ENCODE measurements at regions of chr20 and their contacts with region 1.

Region 1: GRCh38 chr20:57596998-57597939 is 23.0 kb downstream of the ZBP1 start:
- DNase-seq: no peak
- H3K4me3 ChIP-seq: peak overlapping the region in 1 of 2 donors; percentile 9
- H3K27ac ChIP-seq: no peak overlapping the region
- H3K4me1 ChIP-seq: peaks cover 15% of the 10 kb centered on the region
- H3K27me3 ChIP-seq: no peaks in the 10 kb centered on the region
- CTCF ChIP-seq: peak; percentile 88 to 97 (median 95)
- POLR2A ChIP-seq: no peak

Region 2: GRCh38 chr20:57391074-57391554 is 206.2 kb before region 1 on chr20 and contains the start of gene RBM38:
- intact Hi-C with region 1: loop called (anchors 10 kb)
- DNase-seq: no peak
- H3K4me3 ChIP-seq: peak within 1 kb of the TSS; percentile 61 to 92
- H3K27ac ChIP-seq: peak within 1 kb of the TSS; percentile 68
- H3K4me1 ChIP-seq: peaks cover 55% of the 10 kb centered on the region
- H3K27me3 ChIP-seq: no peaks in the 10 kb centered on the region
- CTCF ChIP-seq: no peak
- POLR2A ChIP-seq: no peak
- total RNA-seq, gene RBM38: 24.8 TPM

Region 3: DNA sequence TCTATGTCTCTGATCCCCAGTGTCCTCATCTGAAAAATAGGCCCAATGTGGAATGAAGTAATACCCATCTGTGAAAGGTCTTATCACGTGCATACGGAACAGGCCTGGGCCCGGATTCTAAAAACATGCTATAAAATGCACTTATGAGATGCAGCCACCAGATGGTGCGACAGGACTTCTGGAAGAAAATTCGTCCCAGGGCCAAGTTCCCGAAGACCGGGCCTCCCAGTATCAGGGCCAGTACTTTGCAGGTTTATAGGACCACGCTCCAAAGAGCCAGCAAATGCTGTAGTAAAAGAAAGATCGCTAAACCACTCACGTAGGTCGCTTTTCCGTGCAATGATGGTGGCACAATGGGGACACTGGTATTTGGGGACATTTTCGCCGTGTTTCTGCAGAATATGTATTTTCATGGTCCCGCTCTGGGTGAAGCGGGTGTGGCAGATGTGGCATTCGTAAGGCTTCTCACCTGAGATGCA is 83.0 kb before region 1 on chr20:
- intact Hi-C with region 1: loop called (anchors 2 kb)
- DNase-seq: no peak
- H3K4me3 ChIP-seq: no peak overlapping the region
- H3K27ac ChIP-seq: no peak overlapping the region
- H3K4me1 ChIP-seq: no peaks in the 10 kb centered on the region
- H3K27me3 ChIP-seq: no peaks in the 10 kb centered on the region
- CTCF ChIP-seq: peak; percentile 82 to 92 (median 87)
- POLR2A ChIP-seq: no peak

Region 4: GRCh38 chr20:57991211-57991881 is 394.1 kb after region 1 on chr20:
- intact Hi-C with region 1: no loop called
- DNase-seq: no peak
- H3K4me3 ChIP-seq: no peak overlapping the region
- H3K27ac ChIP-seq: peak overlapping the region; percentile 69
- H3K4me1 ChIP-seq: peaks cover 60% of the 10 kb centered on the region
- H3K27me3 ChIP-seq: no peaks in the 10 kb centered on the region
- CTCF ChIP-seq: no peak
- POLR2A ChIP-seq: no peak

Region 5: GRCh38 chr20:58209652-58210397 is 612.6 kb after region 1 on chr20:
- intact Hi-C with region 1: loop called (anchors 2 kb)
- DNase-seq: no peak
- H3K4me3 ChIP-seq: no peak overlapping the region
- H3K27ac ChIP-seq: no peak overlapping the region
- H3K4me1 ChIP-seq: no peaks in the 10 kb centered on the region
- H3K27me3 ChIP-seq: no peaks in the 10 kb centered on the region
- CTCF ChIP-seq: peak; percentile 100
- POLR2A ChIP-seq: no peak

Region 6: GRCh38 chr20:58447511-58448391 is 850.5 kb after region 1 on chr20:
- intact Hi-C with region 1: no loop called
- DNase-seq: no peak
- H3K4me3 ChIP-seq: no peak overlapping the region
- H3K27ac ChIP-seq: no peak overlapping the region
- H3K4me1 ChIP-seq: no peaks in the 10 kb centered on the region
- H3K27me3 ChIP-seq: no peaks in the 10 kb centered on the region
- CTCF ChIP-seq: no peak
- POLR2A ChIP-seq: no peak